MCF 10A (cell line): ENCODE measurements at regions of chr12 and their contacts with region 1.

Region 1: DNA sequence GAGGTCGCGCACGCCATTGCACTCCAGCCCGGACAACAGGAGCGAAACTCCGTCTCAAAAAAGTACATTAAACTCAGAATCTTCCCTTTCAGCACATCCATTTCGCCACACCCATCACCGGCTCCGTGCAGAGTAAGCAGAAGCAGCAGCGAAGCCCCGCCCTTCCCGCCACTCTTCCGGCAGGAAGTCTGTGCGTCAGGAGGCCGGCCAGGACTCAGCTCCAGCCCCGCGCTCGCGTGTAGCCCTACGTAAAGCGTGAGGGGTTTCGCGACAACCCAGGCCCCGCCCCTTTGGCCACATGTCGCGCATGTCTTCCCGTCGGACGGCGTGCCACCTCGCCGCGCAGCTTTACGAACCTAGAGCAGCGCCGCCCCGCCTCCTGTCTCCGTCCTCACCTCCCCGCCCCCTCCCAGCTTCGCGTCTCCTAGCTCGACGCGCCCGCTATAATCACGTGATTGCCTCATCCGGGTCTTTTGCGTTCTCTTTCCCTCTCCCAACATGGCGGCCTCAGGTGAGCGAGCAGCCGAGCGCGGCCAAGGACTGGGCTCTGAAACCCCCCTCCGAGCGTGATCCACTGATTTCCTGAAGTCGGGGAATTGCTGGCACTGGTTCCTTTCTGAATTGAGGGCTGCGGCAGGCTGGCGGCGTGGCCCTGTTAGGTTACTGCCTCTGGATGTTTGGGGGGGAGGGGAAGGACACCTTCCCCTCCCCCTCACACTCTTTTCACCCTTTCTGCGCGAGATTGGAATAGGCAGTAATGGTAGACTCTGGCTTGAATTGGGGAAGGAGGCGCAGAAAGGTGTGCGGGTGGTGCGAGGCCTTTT is at the start of gene EIF4B:
- DNase-seq: peak; percentile 99
- H3K4me3 Mint-ChIP-seq: peak within 1 kb of the TSS; percentile 98
- H3K27ac Mint-ChIP-seq: peak within 1 kb of the TSS; percentile 98
- H3K4me1 Mint-ChIP-seq: peaks cover 31% of the 10 kb centered on the region
- H3K27me3 Mint-ChIP-seq: no peaks in the 10 kb centered on the region
- CTCF ChIP-seq: no peak
- total RNA-seq, gene EIF4B: 580 and 658 TPM in 2 replicates

Region 2: GRCh38 chr12:52903285-52903854 is 102.8 kb before region 1 on chr12:
- CTCF ChIA-PET with region 1: interaction called, 3 read pairs
- POLR2A ChIA-PET with region 1: interaction called, 10 read pairs
- intact Hi-C with region 1: no loop called
- DNase-seq: peak; percentile 87
- H3K4me3 Mint-ChIP-seq: peak overlapping the region; percentile 76
- H3K27ac Mint-ChIP-seq: peak overlapping the region; percentile 82
- H3K4me1 Mint-ChIP-seq: peaks cover 28% of the 10 kb centered on the region
- H3K27me3 Mint-ChIP-seq: no peaks in the 10 kb centered on the region
- CTCF ChIP-seq: no peak

Region 3: DNA sequence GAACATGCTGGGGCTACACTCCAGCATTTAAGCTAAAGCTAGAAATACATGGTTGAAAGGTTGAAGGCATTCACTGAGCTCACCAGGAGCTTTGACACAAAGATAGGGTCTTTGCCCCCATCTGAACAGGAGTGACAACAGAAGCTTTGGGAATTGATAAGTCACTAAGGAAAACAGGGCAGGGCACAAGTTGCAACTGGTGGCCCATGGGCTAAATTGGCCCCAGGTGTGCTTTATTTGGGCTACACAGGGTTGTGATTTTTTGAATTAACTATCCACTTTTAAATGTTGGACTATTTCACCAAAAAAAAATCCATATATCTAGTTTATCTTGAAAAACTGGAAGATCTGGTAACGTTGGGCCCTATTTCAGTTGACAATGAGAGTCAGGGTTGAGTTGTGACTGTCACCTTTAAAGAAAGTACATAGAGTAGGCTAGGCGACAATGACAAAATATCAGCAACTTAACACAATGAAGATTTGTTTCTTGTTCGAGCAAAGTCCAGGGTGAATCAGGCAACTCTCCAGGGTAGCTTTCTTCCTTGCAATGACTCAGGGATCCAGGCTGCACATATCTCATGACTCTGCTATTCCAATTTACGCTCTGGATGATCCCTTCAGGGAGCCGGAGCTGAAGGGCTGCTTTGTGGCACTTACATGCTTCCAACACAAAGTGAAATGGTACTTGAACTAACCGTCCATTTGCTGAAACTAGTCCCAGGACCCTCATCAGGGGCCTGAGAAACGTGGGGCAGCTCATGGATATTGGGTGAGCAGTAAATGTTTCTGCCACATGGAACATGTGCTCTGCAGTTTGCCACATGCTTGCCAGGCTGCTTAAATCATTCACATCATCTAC is 13.3 kb before region 1 on chr12:
- CTCF ChIA-PET with region 1: interaction called, 4 read pairs
- POLR2A ChIA-PET with region 1: interaction called, 16 read pairs
- intact Hi-C with region 1: no loop called
- DNase-seq: peak; percentile 43
- H3K4me3 Mint-ChIP-seq: no peak overlapping the region
- H3K27ac Mint-ChIP-seq: no peak overlapping the region
- H3K4me1 Mint-ChIP-seq: peaks cover 8% of the 10 kb centered on the region
- H3K27me3 Mint-ChIP-seq: no peaks in the 10 kb centered on the region
- CTCF ChIP-seq: no peak

Region 4: GRCh38 chr12:53047221-53048042 is 41.2 kb after region 1 on chr12:
- CTCF ChIA-PET with region 1: interaction called, 3 read pairs
- POLR2A ChIA-PET with region 1: interaction called, 34 read pairs
- intact Hi-C with region 1: no loop called
- DNase-seq: peak; percentile 64
- H3K4me3 Mint-ChIP-seq: peak overlapping the region; percentile 80
- H3K27ac Mint-ChIP-seq: peak overlapping the region; percentile 87
- H3K4me1 Mint-ChIP-seq: peaks cover 46% of the 10 kb centered on the region
- H3K27me3 Mint-ChIP-seq: no peaks in the 10 kb centered on the region
- CTCF ChIP-seq: peak; percentile 28

Region 5: DNA sequence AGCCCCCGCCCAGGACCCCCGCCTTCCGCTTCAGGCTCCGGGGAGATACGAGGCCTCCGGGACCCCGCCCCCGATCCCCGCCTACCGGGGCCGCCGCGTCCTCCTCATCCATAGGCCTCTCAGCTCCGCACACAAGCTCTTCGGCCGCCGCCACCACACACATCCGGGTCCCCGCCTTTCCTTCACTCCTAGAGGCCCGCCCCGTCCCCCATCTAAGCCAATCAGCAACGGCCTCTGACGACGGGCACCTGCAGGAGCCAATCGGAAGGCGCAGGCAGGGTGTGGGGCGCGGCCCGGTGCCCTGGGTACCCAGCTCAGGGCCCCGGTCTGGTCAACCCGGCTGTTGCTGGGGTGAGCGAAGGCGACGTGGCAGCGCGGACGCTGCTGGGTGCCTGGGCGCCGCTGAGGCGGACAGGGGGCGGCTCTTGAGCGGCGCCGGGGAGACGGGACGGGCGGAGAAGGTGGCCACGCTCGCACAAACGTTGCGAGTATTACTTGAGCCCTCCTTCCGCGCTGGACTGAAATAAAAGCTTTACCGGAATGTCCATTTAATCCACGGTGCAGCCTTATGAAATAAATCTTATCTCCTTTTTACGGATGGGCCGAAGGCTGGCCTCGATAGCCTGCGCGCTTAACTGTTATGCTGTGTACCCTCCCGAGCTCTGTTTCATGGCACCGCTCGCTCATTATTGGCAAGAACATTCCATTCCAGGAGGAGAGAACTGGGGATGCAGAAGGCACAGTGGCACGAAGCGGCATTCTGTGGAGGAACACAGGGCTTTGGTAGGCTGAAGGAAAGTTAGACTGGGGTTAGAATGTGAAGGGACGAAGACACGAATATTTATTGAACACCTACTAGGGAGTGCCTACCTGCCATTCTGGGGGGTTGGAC is 73.3 kb after region 1 on chr12 and contains the start of gene SPRYD3:
- CTCF ChIA-PET with region 1: no interaction called
- POLR2A ChIA-PET with region 1: interaction called, 12 read pairs
- intact Hi-C with region 1: loop called (anchors 2 kb)
- DNase-seq: peak; percentile 97
- H3K4me3 Mint-ChIP-seq: peak within 1 kb of the TSS; percentile 73
- H3K27ac Mint-ChIP-seq: peak within 1 kb of the TSS; percentile 61
- H3K4me1 Mint-ChIP-seq: peaks cover 23% of the 10 kb centered on the region
- H3K27me3 Mint-ChIP-seq: no peaks in the 10 kb centered on the region
- CTCF ChIP-seq: no peak
- total RNA-seq, gene SPRYD3: 35.2 and 39.9 TPM in 2 replicates

Region 6: DNA sequence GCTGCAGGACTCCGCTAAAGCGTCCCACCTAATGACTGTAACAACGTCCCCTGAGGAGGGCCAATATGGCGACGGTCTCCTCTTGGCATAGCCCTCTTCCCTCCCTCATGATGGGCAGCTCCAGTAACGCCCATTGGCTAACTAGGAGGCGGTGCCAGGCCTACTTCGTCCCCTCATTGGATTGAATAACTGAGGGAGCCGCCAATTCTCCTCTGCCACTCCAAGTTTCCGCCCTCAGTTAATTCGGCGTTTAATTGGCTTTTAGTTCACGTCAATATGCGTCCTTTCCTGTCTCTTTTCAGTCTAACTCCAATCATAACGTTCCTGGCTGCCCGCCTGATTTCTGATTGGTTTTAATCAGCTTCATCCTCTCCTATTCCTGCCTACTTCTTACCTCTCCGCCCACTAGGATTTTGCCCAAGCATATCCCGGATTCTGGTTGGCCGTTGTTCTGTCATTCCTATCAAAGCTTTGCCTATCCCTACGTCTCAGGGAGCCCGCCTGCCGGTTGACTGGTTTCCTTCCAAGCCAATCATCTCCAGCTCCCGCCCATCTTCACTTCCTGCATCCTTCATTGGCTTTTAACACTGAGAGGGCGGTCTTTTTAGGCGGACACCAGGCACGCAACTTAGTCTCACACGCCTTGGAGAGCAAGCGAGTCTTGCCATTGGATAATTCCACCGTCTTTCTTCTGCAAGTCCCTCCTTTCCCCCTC is 373.3 kb after region 1 on chr12:
- CTCF ChIA-PET with region 1: no interaction called
- POLR2A ChIA-PET with region 1: interaction called, 12 read pairs
- intact Hi-C with region 1: no loop called
- DNase-seq: peak; percentile 100
- H3K4me3 Mint-ChIP-seq: no peak overlapping the region
- H3K27ac Mint-ChIP-seq: no peak overlapping the region
- H3K4me1 Mint-ChIP-seq: peaks cover 27% of the 10 kb centered on the region
- H3K27me3 Mint-ChIP-seq: no peaks in the 10 kb centered on the region
- CTCF ChIP-seq: no peak